Activated B cell treated with CpG ODN at 0.5 μM for 24 hours (primary cell): ENCODE measurements at regions of chr1 and their contacts with region 1.

Region 1: GRCh38 chr1:107196973-107197562 is 56.2 kb downstream of the NTNG1 start:
- DNase-seq: no peak
- ATAC-seq: peak; percentile 74
- H3K4me3 Mint-ChIP-seq: no peak overlapping the region
- H3K27ac Mint-ChIP-seq: no peak overlapping the region
- H3K4me1 Mint-ChIP-seq: peaks cover 3% of the 10 kb centered on the region
- H3K27me3 Mint-ChIP-seq: no peaks in the 10 kb centered on the region
- CTCF ChIP-seq: no peak

Region 2: DNA sequence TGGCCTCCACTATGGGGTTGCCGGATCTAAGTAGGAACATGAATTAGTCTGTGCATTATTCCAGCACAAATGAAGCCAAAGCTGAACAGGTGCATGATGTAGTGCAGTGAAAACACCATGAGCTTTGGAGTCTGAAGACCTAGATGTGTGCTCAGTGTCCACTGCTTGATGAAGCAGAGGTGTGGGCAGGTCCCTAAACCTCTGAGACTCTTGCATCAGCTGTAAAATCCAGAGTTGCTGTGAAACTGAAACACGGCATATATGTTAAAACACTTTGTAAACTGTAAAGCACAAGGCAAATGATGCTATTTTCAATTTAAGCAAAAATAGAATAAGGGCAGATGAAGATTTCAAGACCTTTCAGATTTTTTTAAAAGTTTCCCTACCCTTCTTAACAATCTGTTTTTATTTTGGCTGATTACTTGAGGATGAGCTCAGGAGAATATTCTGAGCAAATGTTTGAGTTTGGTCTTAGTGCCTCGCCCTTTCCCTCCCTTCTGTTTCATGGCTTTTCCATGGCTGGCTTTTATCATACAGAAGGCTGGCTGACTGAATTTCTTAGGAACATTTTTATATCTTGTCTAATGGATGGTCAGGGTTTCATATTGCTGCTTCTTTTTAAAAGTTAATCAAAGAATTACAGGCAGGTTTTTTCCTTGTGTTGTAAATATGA is 165.5 kb after region 1 on chr1:
- CTCF ChIA-PET with region 1: no interaction called
- POLR2A ChIA-PET with region 1: no interaction called
- intact Hi-C with region 1: loop called (anchors 5 kb)
- DNase-seq: no peak
- ATAC-seq: no peak
- H3K4me3 Mint-ChIP-seq: no peak overlapping the region
- H3K27ac Mint-ChIP-seq: peak overlapping the region; percentile 69
- H3K4me1 Mint-ChIP-seq: peaks cover 47% of the 10 kb centered on the region
- H3K27me3 Mint-ChIP-seq: no peaks in the 10 kb centered on the region
- CTCF ChIP-seq: no peak

Region 3: DNA sequence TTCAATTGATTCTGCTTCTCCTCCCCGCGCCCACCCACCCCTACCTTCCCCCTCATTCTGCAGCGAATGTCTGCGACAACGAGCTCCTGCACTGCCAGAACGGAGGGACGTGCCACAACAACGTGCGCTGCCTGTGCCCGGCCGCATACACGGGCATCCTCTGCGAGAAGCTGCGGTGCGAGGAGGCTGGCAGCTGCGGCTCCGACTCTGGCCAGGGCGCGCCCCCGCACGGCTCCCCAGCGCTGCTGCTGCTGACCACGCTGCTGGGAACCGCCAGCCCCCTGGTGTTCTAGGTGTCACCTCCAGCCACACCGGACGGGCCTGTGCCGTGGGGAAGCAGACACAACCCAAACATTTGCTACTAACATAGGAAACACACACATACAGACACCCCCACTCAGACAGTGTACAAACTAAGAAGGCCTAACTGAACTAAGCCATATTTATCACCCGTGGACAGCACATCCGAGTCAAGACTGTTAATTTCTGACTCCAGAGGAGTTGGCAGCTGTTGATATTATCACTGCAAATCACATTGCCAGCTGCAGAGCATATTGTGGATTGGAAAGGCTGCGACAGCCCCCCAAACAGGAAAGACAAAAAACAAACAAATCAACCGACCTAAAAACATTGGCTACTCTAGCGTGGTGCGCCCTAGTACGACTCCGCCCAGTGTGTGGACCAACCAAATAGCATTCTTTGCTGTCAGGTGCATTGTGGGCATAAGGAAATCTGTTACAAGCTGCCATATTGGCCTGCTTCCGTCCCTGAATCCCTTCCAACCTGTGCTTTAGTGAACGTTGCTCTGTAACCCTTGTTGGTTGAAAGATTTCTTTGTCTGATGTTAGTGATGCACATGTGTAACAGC is 283.7 kb after region 1 on chr1:
- CTCF ChIA-PET with region 1: interaction called, 4 read pairs
- POLR2A ChIA-PET with region 1: no interaction called
- intact Hi-C with region 1: loop called (anchors 1 kb)
- DNase-seq: peak; percentile 50
- ATAC-seq: peak; percentile 98
- H3K4me3 Mint-ChIP-seq: peak overlapping the region; percentile 73
- H3K27ac Mint-ChIP-seq: peak overlapping the region; percentile 54
- H3K4me1 Mint-ChIP-seq: peaks cover 15% of the 10 kb centered on the region
- H3K27me3 Mint-ChIP-seq: no peaks in the 10 kb centered on the region
- CTCF ChIP-seq: no peak